PC-3 (cell line): ENCODE measurements at regions of chr10 and their contacts with region 1.

Region 1: GRCh38 chr10:43407576-43408330 is 1.2 kb downstream of the HNRNPF start:
- DNase-seq: peak; percentile 92
- ATAC-seq: peak; percentile 31
- H3K4me3 ChIP-seq: peak overlapping the region; percentile 98
- H3K27ac ChIP-seq: peak overlapping the region; percentile 91
- H3K4me1 ChIP-seq: peaks cover 37% of the 10 kb centered on the region
- H3K27me3 ChIP-seq: no peaks in the 10 kb centered on the region
- CTCF ChIP-seq: peak; percentile 55

Region 2: GRCh38 chr10:43265799-43266721 is 141.7 kb before region 1 on chr10:
- CTCF ChIA-PET with region 1: no interaction called
- POLR2A ChIA-PET with region 1: no interaction called
- intact Hi-C with region 1: no loop called
- DNase-seq: peak; percentile 57
- ATAC-seq: peak; percentile 88
- H3K4me3 ChIP-seq: 0 out of 2 replicates have a peak overlapping the region, but pooled peaks have one; percentile 9
- H3K27ac ChIP-seq: no peak overlapping the region
- H3K4me1 ChIP-seq: no peaks in the 10 kb centered on the region
- H3K27me3 ChIP-seq: peaks cover 64% of the 10 kb centered on the region
- CTCF ChIP-seq: peak; percentile 60

Region 3: GRCh38 chr10:43372765-43373361 is 34.9 kb before region 1 on chr10:
- CTCF ChIA-PET with region 1: no interaction called
- POLR2A ChIA-PET with region 1: no interaction called
- intact Hi-C with region 1: no loop called
- DNase-seq: no peak
- ATAC-seq: no peak
- H3K4me3 ChIP-seq: no peak overlapping the region
- H3K27ac ChIP-seq: no peak overlapping the region
- H3K4me1 ChIP-seq: no peaks in the 10 kb centered on the region
- H3K27me3 ChIP-seq: no peaks in the 10 kb centered on the region
- CTCF ChIP-seq: no peak

Region 4: DNA sequence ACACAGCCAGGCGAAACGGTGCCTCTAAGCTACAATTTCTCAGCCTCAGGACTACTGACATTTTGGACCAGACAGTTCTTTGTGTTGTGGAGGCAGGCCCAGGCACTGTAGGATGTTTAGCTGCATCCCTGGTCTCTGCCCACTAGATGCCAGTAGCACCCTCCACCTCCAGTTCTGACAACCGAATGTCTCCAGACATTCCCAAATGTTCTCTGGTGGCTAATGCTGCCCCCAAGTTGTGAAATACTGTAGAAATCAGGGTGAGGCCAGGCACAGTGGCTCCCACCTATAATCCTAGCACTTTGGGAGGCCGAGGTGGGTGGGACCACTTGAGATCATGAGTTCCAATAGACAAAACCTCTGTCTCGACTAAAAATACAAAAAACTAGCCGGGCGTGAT is 17.0 kb before region 1 on chr10:
- CTCF ChIA-PET with region 1: no interaction called
- POLR2A ChIA-PET with region 1: no interaction called
- intact Hi-C with region 1: loop called (anchors 2 kb)
- DNase-seq: peak; percentile 61
- ATAC-seq: peak; percentile 83
- H3K4me3 ChIP-seq: no peak overlapping the region
- H3K27ac ChIP-seq: no peak overlapping the region
- H3K4me1 ChIP-seq: peaks cover 13% of the 10 kb centered on the region
- H3K27me3 ChIP-seq: no peaks in the 10 kb centered on the region
- CTCF ChIP-seq: peak; percentile 71

Region 5: DNA sequence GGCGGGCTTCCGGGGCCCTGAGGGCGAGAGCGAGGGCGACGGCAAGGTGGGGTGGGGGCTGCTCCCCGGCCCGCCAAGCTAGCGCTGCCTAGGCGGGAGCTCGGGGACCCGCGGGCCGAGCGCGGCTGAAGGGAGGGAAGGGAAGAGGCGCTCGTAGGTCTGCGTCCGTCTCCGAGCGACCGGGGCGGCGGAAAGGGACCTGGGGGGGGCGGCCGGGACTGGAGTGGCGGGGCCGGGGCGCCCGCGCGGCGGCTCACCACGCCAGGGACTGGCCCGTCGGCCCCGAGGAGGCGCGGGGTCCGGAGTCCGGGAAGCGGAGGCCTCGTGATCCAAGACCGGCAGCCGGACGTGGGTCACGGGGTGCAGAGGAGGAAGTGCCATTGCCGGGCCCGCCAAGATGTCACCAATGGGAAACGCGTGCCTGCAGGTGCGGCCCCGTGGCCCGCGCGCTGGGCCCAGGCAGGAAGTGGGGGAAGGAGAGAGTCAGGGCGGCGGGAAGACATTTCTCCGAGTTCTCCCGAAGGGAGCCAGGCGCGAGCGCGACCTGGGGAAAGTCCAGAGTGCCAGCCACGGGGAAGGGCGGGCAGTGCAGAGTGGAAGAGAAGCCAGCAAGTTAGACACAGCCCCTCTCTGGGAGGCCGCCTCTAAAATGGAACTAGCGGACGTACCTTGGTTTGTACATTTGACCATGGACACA is 10.7 kb before region 1 on chr10:
- CTCF ChIA-PET with region 1: interaction called, 6 read pairs
- POLR2A ChIA-PET with region 1: no interaction called
- intact Hi-C with region 1: loop called (anchors 1 kb)
- DNase-seq: peak; percentile 96
- ATAC-seq: peak; percentile 80
- H3K4me3 ChIP-seq: peak overlapping the region; percentile 78
- H3K27ac ChIP-seq: peak overlapping the region; percentile 93
- H3K4me1 ChIP-seq: peaks cover 54% of the 10 kb centered on the region
- H3K27me3 ChIP-seq: no peaks in the 10 kb centered on the region
- CTCF ChIP-seq: no peak

Region 6: DNA sequence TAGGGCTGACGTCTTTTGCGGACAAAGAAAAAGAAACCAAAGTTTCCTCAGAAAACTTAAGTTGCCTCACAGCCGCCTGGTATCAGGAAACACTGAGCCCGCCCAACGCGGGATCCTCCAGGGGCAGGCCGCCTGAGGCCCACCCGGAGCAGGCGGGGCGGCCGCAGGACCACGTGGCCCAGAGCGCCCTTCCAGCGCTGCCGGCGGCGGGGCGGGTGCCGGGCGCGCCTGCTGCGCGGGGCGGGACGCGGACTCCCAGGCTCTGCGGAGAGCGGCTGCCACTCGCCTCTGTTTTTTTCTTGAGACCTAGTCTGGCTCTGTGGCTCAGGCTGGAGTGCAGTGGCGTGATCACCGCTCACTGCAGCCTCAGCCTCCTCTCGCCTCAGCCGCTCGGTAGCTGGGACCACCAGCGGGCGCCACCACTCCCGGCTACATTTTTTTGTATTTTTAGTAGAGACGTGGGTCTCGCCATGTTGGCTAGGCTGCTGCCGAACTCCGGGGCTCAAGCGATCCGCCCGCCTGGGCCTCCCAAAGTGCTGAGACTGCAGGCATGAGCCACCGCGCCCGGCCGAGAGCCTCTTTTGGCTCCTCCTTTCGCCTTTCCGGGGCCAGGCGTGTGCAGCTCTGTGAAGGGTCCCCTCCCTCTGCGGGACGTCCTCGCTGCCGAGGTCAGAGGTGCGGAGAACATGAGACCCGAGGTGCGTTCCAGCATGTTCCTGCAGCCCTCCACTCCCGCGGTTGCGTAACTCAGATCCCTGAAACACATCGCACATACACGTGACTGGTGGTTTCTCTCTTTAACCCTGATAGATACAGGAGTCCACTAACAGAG is 12.8 kb after region 1 on chr10:
- CTCF ChIA-PET with region 1: no interaction called
- POLR2A ChIA-PET with region 1: interaction called, 8 read pairs
- intact Hi-C with region 1: loop called (anchors 1 kb)
- DNase-seq: peak; percentile 74
- ATAC-seq: peak; percentile 92
- H3K4me3 ChIP-seq: peak overlapping the region; percentile 71
- H3K27ac ChIP-seq: peak overlapping the region; percentile 68
- H3K4me1 ChIP-seq: peaks cover 14% of the 10 kb centered on the region
- H3K27me3 ChIP-seq: no peaks in the 10 kb centered on the region
- CTCF ChIP-seq: peak; percentile 33; the same call in 1 of the 2 replicates

Region 7: GRCh38 chr10:43436400-43437140 is 28.8 kb after region 1 on chr10 and contains the start of gene ZNF487:
- CTCF ChIA-PET with region 1: no interaction called
- POLR2A ChIA-PET with region 1: interaction called, 4 read pairs
- intact Hi-C with region 1: loop called (anchors 1 kb)
- DNase-seq: peak; percentile 93
- ATAC-seq: peak; percentile 95
- H3K4me3 ChIP-seq: peak within 1 kb of the TSS; percentile 78
- H3K27ac ChIP-seq: peak within 1 kb of the TSS; percentile 83
- H3K4me1 ChIP-seq: peaks cover 5% of the 10 kb centered on the region; the same call in 1 of the 2 replicates
- H3K27me3 ChIP-seq: no peaks in the 10 kb centered on the region
- CTCF ChIP-seq: no peak
- total RNA-seq, gene ZNF487: 7.0 and 9.4 TPM in 2 replicates

Region 8: DNA sequence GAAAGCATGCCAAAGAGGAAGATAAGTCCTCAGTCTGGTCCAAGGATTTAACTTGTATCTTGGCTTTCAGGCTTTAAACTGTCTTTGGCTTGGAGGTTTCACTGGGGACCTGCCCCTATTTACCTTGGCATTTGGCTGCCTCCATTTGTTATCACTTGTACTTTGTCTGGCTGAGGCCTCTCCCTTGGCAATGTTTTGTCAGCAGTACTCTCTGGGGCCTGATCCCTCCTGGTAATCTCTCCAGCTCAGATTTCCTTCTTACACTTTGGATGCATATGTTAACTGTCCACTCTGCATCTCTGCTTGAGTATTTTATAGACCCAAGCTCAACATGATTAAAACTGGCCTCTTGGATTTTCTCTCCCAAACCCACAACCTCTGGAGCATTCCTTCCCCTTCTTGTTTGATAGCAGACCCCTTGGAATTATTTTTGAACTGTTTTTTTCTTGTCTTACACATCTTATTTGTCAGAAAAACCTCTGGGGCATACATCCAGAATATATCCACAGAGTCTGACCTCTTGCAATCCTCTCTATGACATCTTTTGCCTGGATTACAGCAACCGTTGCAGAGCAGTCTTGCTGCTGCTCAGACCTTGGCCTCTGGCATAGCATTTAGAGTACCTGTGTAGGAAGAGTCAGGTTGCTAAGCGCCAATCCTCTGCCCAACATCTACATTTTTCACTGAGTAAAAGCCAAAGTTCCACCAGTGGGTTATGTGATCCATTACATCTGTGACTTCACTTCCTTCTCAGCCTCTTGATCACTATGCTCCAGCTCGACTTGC is 64.4 kb after region 1 on chr10:
- CTCF ChIA-PET with region 1: no interaction called
- POLR2A ChIA-PET with region 1: no interaction called
- intact Hi-C with region 1: no loop called
- DNase-seq: no peak
- ATAC-seq: no peak
- H3K4me3 ChIP-seq: no peak overlapping the region
- H3K27ac ChIP-seq: no peak overlapping the region
- H3K4me1 ChIP-seq: no peaks in the 10 kb centered on the region
- H3K27me3 ChIP-seq: no peaks in the 10 kb centered on the region
- CTCF ChIP-seq: no peak